Endothelial cell of umbilical vein (primary cell): ENCODE measurements at regions of chr6 and their contacts with region 1.

Region 1: GRCh38 chr6:136846046-136846445 is 23.7 kb downstream of the PEX7 start:
- DNase-seq: peak; percentile 55
- H3K4me3 ChIP-seq: no peak overlapping the region
- H3K27ac ChIP-seq: no peak overlapping the region
- H3K4me1 ChIP-seq: no peaks in the 10 kb centered on the region
- H3K27me3 ChIP-seq: no peaks in the 10 kb centered on the region
- CTCF ChIP-seq: peak; percentile 62 to 64
- POLR2A ChIP-seq: no peak

Region 2: DNA sequence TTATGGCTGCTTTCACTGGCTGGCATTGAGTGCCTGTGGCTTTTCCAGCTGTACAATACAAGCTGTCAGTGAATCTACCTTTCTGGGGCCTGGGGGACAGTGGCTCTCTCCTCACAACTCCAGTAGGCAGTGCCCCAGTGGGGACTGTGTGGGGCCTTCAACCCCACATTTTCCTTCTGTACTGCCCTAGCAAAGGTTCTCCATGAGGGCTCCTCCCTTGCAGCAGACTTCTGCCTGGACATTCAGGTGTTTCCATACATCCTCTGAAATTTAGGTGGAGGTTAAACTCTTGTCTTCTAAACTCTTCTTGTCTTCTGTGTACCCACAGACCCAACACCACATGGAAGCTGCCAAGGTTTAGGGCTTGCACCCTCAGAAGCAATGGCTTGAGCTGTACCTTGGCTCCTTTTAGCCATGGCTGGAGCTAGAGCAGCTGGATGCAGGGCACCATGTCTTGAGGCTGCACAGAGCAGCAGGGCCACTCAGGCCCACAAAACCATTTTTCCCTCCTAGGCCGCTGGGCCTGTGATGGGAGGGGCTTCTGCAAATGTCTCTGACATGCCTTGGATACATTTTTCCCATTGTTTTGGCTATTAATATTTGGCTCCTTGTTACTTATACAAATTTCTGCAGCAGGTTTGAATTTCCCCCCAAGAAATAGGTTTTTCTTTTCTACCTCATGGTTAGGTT is 14.0 kb before region 1 on chr6:
- CTCF ChIA-PET with region 1: interaction called, 10 read pairs
- POLR2A ChIA-PET with region 1: no interaction called
- dilution Hi-C with region 1: no loop called
- intact Hi-C with region 1: no loop called
- DNase-seq: no peak
- H3K4me3 ChIP-seq: no peak overlapping the region
- H3K27ac ChIP-seq: no peak overlapping the region
- H3K4me1 ChIP-seq: no peaks in the 10 kb centered on the region
- H3K27me3 ChIP-seq: no peaks in the 10 kb centered on the region
- CTCF ChIP-seq: no peak
- POLR2A ChIP-seq: no peak

Region 3: DNA sequence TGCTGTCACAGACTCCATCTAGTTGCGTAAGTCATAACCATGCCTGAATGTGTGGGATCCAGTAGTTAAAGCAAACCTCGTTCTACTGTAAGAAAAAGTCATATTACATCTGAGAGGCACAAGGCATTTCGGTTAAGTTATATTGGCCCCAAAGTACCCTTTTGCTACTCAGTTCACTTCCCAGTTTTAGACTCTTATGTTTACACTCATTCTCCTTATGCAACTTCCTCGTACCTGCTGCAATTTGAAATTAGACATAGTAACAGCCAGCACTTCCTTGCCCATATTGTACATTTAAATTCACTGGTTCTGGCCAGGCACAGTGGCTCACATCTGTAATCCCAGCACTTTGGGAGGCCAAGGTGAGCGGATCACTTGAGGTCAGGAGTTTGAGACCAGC is 13.4 kb after region 1 on chr6:
- CTCF ChIA-PET with region 1: interaction called, 31 read pairs
- POLR2A ChIA-PET with region 1: no interaction called
- dilution Hi-C with region 1: no loop called
- intact Hi-C with region 1: no loop called
- DNase-seq: no peak
- H3K4me3 ChIP-seq: no peak overlapping the region
- H3K27ac ChIP-seq: no peak overlapping the region
- H3K4me1 ChIP-seq: no peaks in the 10 kb centered on the region
- H3K27me3 ChIP-seq: no peaks in the 10 kb centered on the region
- CTCF ChIP-seq: no peak
- POLR2A ChIP-seq: no peak

Region 4: GRCh38 chr6:136921936-136922684 is 76.1 kb after region 1 on chr6 and contains the start of gene SLC35D3:
- CTCF ChIA-PET with region 1: interaction called, 3 read pairs
- POLR2A ChIA-PET with region 1: no interaction called
- dilution Hi-C with region 1: no loop called
- intact Hi-C with region 1: loop called (anchors 1 kb)
- DNase-seq: peak; percentile 14
- H3K4me3 ChIP-seq: peak within 1 kb of the TSS; percentile 33 to 50 (median 43)
- H3K27ac ChIP-seq: no peak within 1 kb of the TSS
- H3K4me1 ChIP-seq: peaks cover 23% of the 10 kb centered on the region
- H3K27me3 ChIP-seq: peaks cover 32 to 53% of the 10 kb centered on the region in 2 experiments
- CTCF ChIP-seq: no peak
- POLR2A ChIP-seq: no peak
- total RNA-seq, gene SLC35D3: not detected in 2 replicates

Region 5: GRCh38 chr6:137013738-137014602 is 167.9 kb after region 1 on chr6:
- CTCF ChIA-PET with region 1: interaction called, 6 read pairs
- POLR2A ChIA-PET with region 1: no interaction called
- dilution Hi-C with region 1: no loop called
- intact Hi-C with region 1: loop called (anchors 5 kb)
- DNase-seq: peak; percentile 27
- H3K4me3 ChIP-seq: no peak overlapping the region
- H3K27ac ChIP-seq: no peak overlapping the region
- H3K4me1 ChIP-seq: no peaks in the 10 kb centered on the region
- H3K27me3 ChIP-seq: peaks cover 5 to 23% of the 10 kb centered on the region in 2 experiments
- CTCF ChIP-seq: peak; percentile 6 to 40
- POLR2A ChIP-seq: no peak

Region 6: GRCh38 chr6:137076277-137077068 is 230.4 kb after region 1 on chr6:
- CTCF ChIA-PET with region 1: interaction called, 5 read pairs
- POLR2A ChIA-PET with region 1: no interaction called
- dilution Hi-C with region 1: no loop called
- intact Hi-C with region 1: loop called (anchors 5 kb)
- DNase-seq: peak; percentile 60
- H3K4me3 ChIP-seq: no peak overlapping the region
- H3K27ac ChIP-seq: no peak overlapping the region
- H3K4me1 ChIP-seq: no peaks in the 10 kb centered on the region
- H3K27me3 ChIP-seq: peaks cover 2% of the 10 kb centered on the region in 2 experiments
- CTCF ChIP-seq: peak; percentile 67 to 76
- POLR2A ChIP-seq: no peak

Region 7: GRCh38 chr6:137641474-137642077 is 795.5 kb after region 1 on chr6:
- CTCF ChIA-PET with region 1: interaction called, 3 read pairs
- POLR2A ChIA-PET with region 1: no interaction called
- dilution Hi-C with region 1: no loop called
- intact Hi-C with region 1: loop called (anchors 1 kb)
- DNase-seq: peak; percentile 70
- H3K4me3 ChIP-seq: no peak overlapping the region
- H3K27ac ChIP-seq: no peak overlapping the region
- H3K4me1 ChIP-seq: no peaks in the 10 kb centered on the region
- H3K27me3 ChIP-seq: peaks cover 0 to 3% of the 10 kb centered on the region in 2 experiments
- CTCF ChIP-seq: peak; percentile 55 to 58
- POLR2A ChIP-seq: no peak